Activated CD8-positive, alpha-beta T cell treated with anti-CD3 and anti-CD28 coated beads, Interleukin-2, amount 10 ng/mL, durations not matched to agents 7 days and 5 days (primary cell): ENCODE measurements at regions of chr7 and their contacts with region 1.

Region 1: GRCh38 chr7:134432296-134433152 is 26.4 kb downstream of the AKR1B1 start:
- DNase-seq: peak; percentile 85
- ATAC-seq: peak; percentile 98
- H3K4me3 Mint-ChIP-seq: peak overlapping the region; percentile 73
- H3K27ac Mint-ChIP-seq: peak overlapping the region; percentile 85
- H3K4me1 Mint-ChIP-seq: peaks cover 18% of the 10 kb centered on the region
- H3K27me3 Mint-ChIP-seq: peaks cover 3% of the 10 kb centered on the region

Region 2: GRCh38 chr7:134458806-134459698 is 26.5 kb after region 1 on chr7 and contains the start of gene AKR1B1:
- CTCF ChIA-PET with region 1: interaction called, 39 read pairs
- POLR2A ChIA-PET with region 1: no interaction called
- DNase-seq: peak; percentile 92
- ATAC-seq: peak; percentile 93
- H3K4me3 Mint-ChIP-seq: peak within 1 kb of the TSS; percentile 86
- H3K27ac Mint-ChIP-seq: peak within 1 kb of the TSS; percentile 81
- H3K4me1 Mint-ChIP-seq: peaks cover 42% of the 10 kb centered on the region
- H3K27me3 Mint-ChIP-seq: no peaks in the 10 kb centered on the region
- total RNA-seq, gene AKR1B1: 99.8 to 101 TPM

Region 3: DNA sequence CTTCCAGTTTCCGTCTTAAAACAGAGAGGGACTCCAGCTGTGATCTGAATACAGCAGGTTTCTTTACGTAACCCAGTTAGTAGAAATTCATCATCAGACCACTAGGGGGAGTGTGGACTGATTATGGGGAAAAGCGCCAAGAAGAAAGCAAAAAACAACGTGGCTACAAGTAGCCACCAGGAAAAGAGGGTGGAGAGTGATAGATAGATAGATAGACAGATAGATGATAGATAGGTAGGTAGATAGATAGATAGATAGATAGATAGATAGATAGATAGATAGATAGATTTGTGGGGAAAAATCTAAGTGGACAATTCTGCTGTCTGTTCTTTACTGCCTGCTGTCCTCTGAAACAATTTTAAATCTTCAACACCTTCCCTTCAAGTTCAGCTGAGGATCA is 82.1 kb after region 1 on chr7:
- CTCF ChIA-PET with region 1: interaction called, 99 read pairs
- POLR2A ChIA-PET with region 1: no interaction called
- DNase-seq: peak; percentile 59
- ATAC-seq: peak; percentile 74
- H3K4me3 Mint-ChIP-seq: no peak overlapping the region
- H3K27ac Mint-ChIP-seq: no peak overlapping the region
- H3K4me1 Mint-ChIP-seq: peaks cover 5% of the 10 kb centered on the region
- H3K27me3 Mint-ChIP-seq: peaks cover 10% of the 10 kb centered on the region

Region 4: DNA sequence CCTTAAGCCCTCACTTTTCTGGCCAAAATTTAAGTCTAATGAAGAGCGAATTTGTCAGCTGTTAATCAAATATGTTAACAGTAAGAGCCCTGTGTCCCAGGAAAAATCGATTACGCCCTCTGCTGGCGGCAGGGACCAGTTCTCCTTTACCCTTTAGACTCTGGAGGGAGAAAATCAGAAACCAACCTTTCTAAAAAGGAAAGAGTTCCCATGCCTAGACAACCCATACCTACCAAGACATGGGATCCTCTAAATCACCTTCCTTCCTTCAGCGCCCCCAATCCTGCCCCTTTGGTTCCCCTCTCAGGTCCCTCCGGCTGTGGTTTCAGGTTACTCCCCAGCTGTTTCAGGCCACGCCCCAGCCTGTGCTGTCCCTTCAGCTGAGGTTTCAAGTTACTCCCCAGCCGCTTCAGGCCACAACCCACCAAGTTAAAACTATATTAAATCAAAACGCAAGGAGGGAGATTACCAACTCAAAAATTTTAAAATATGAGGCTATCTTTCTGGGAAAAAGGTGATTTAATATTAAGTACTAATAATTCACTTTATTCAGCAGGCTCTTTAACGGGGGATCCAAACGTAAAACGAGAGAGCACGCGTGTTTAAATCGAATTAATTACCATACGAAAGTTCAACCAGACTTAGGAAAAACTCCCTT is 115.0 kb after region 1 on chr7:
- CTCF ChIA-PET with region 1: interaction called, 51 read pairs
- POLR2A ChIA-PET with region 1: interaction called, 3 read pairs
- DNase-seq: peak; percentile 72
- ATAC-seq: peak; percentile 89
- H3K4me3 Mint-ChIP-seq: no peak overlapping the region
- H3K27ac Mint-ChIP-seq: no peak overlapping the region
- H3K4me1 Mint-ChIP-seq: peaks cover 5% of the 10 kb centered on the region
- H3K27me3 Mint-ChIP-seq: peaks cover 16% of the 10 kb centered on the region

Region 5: GRCh38 chr7:134605973-134606923 is 173.7 kb after region 1 on chr7:
- CTCF ChIA-PET with region 1: interaction called, 55 read pairs
- POLR2A ChIA-PET with region 1: no interaction called
- DNase-seq: peak; percentile 75
- ATAC-seq: peak; percentile 98
- H3K4me3 Mint-ChIP-seq: peak overlapping the region; percentile 28
- H3K27ac Mint-ChIP-seq: no peak overlapping the region
- H3K4me1 Mint-ChIP-seq: peaks cover 4% of the 10 kb centered on the region
- H3K27me3 Mint-ChIP-seq: peaks cover 33% of the 10 kb centered on the region